ENCODE measurements at regions of chr6 and their contacts with region 1.

Region 1: GRCh38 chr6:132814716-132815570 is 574 bp downstream of the RPS12 start:
- DNase-seq: no peak
- H3K4me3 ChIP-seq: peak overlapping the region; percentile 85
- H3K4me3 Mint-ChIP-seq: peak overlapping the region; percentile 97
- H3K27ac Mint-ChIP-seq: peak overlapping the region; percentile 98
- H3K4me1 ChIP-seq: peaks cover 5% of the 10 kb centered on the region; the same call in 1 of the 2 replicates
- H3K4me1 Mint-ChIP-seq: peaks cover 17% of the 10 kb centered on the region
- H3K27me3 ChIP-seq: no peaks in the 10 kb centered on the region
- H3K27me3 Mint-ChIP-seq: no peaks in the 10 kb centered on the region
- CTCF ChIP-seq: no peak

Region 2: DNA sequence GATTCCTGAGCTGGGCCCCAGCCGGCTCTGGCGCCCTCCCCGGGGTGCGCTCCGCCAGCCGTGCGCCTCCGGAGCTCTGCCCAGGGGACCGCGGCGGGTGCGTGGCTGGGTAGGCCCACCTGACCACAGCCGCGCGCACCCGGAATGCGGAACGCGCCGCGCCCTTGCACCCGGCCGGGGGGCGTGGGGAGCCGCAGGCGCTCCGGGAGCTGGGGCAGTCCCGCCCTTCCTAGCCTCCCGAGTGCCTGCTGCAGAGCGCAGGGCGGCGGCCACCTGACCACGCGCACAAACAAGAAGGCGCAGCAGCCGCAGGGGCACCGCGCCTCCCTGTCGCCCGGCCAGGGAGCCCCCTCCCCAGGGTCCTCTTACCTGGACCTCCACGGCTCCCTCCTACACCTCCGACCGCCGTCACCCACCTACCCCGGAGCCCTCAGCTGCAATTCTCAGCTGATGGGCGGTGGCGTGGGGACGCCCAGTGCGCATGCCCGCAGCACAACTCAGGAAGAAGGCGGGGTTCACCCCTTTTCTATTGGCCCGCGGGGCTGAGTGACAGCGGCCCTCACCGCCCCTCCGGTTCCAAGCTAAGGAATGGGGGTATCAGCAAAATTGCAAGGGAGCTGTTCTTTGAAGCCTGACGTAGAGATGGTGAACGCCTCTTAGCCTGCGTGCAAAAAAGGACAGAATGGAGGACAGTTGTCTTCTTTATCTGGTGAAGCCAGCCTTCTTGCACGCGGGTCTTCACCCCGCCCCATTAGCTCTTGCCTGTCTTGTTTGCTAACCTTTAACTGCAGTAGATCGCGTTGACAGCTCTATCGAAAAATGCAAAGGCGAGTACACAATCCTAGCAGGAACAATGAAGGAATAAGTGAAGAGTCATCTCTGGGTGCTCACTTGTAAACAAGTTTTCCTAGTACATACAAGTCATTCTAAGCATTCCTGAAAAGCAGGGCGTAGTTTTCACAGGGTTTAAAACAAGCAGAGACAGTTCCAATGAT is 302.0 kb before region 1 on chr6 and contains the start of gene STX7:
- CTCF ChIA-PET with region 1: no interaction called
- POLR2A ChIA-PET with region 1: interaction called, 6 read pairs
- intact Hi-C with region 1: loop called (anchors 1 kb)
- DNase-seq: peak; percentile 92
- H3K4me3 ChIP-seq: peak within 1 kb of the TSS; percentile 70
- H3K4me3 Mint-ChIP-seq: peak within 1 kb of the TSS; percentile 92
- H3K27ac Mint-ChIP-seq: peak within 1 kb of the TSS; percentile 90
- H3K4me1 ChIP-seq: peaks cover 12% of the 10 kb centered on the region
- H3K4me1 Mint-ChIP-seq: peaks cover 18% of the 10 kb centered on the region
- H3K27me3 ChIP-seq: no peaks in the 10 kb centered on the region
- H3K27me3 Mint-ChIP-seq: no peaks in the 10 kb centered on the region
- CTCF ChIP-seq: no peak
- total RNA-seq, gene STX7: 41.0 and 42.4 TPM in 2 replicates

Region 3: GRCh38 chr6:132566404-132566803 is 248.5 kb before region 1 on chr6:
- CTCF ChIA-PET with region 1: no interaction called
- POLR2A ChIA-PET with region 1: no interaction called
- intact Hi-C with region 1: no loop called
- DNase-seq: no peak
- H3K4me3 ChIP-seq: no peak overlapping the region
- H3K4me3 Mint-ChIP-seq: no peak overlapping the region
- H3K27ac Mint-ChIP-seq: no peak overlapping the region
- H3K4me1 ChIP-seq: peaks cover 3% of the 10 kb centered on the region; the same call in 1 of the 2 replicates
- H3K4me1 Mint-ChIP-seq: peaks cover 5% of the 10 kb centered on the region
- H3K27me3 ChIP-seq: no peaks in the 10 kb centered on the region
- H3K27me3 Mint-ChIP-seq: peaks cover 6% of the 10 kb centered on the region
- CTCF ChIP-seq: no peak

Region 4: GRCh38 chr6:132830334-132830751 is 15.4 kb after region 1 on chr6:
- CTCF ChIA-PET with region 1: no interaction called
- POLR2A ChIA-PET with region 1: no interaction called
- intact Hi-C with region 1: no loop called
- DNase-seq: peak in 1 of 2 experiments; percentile 39
- H3K4me3 ChIP-seq: no peak overlapping the region
- H3K4me3 Mint-ChIP-seq: no peak overlapping the region
- H3K27ac Mint-ChIP-seq: no peak overlapping the region
- H3K4me1 ChIP-seq: no peaks in the 10 kb centered on the region
- H3K4me1 Mint-ChIP-seq: no peaks in the 10 kb centered on the region
- H3K27me3 ChIP-seq: no peaks in the 10 kb centered on the region
- H3K27me3 Mint-ChIP-seq: peaks cover 1% of the 10 kb centered on the region
- CTCF ChIP-seq: peak; percentile 32 to 55

Region 5: GRCh38 chr6:133368664-133369063 is 553.7 kb after region 1 on chr6:
- CTCF ChIA-PET with region 1: no interaction called
- POLR2A ChIA-PET with region 1: no interaction called
- intact Hi-C with region 1: no loop called
- DNase-seq: peak in 1 of 2 experiments; percentile 11
- H3K4me3 ChIP-seq: no peak overlapping the region
- H3K4me3 Mint-ChIP-seq: no peak overlapping the region
- H3K27ac Mint-ChIP-seq: no peak overlapping the region
- H3K4me1 ChIP-seq: no peaks in the 10 kb centered on the region
- H3K4me1 Mint-ChIP-seq: no peaks in the 10 kb centered on the region
- H3K27me3 ChIP-seq: no peaks in the 10 kb centered on the region; the same call in 1 of the 2 replicates
- H3K27me3 Mint-ChIP-seq: peaks cover 12% of the 10 kb centered on the region
- CTCF ChIP-seq: peak in 1 of 2 experiments; percentile 39

Measured in Caco-2 (cell line).